H1 (cell line): ENCODE measurements at regions of chr11 and their contacts with region 1.

Region 1: GRCh38 chr11:10933455-10934292 is 75.8 kb upstream of the ZBED5 start:
- DNase-seq: peak; percentile 65 to 96
- H3K4me3 ChIP-seq: peak overlapping the region; percentile 64 to 86 (median 76); a peak in 7 of 8 replicates
- H3K27ac ChIP-seq: peak overlapping the region; percentile 49; the same call in 1 of the 2 replicates
- H3K4me1 ChIP-seq: peaks cover 3 to 14% (median 5%) of the 10 kb centered on the region in 4 experiments; a peak in 4 of 7 replicates
- H3K27me3 ChIP-seq: peaks cover 0 to 11% (median 10%) of the 10 kb centered on the region in 4 experiments; a peak in 5 of 7 replicates
- CTCF ChIP-seq: peak; percentile 80 to 98 (median 95)
- EP300 ChIP-seq: no peak
- POLR2A ChIP-seq: peak in 1 of 2 experiments; percentile 53; a peak in 1 of 3 replicates
- RAD21 ChIP-seq: peak; percentile 97 to 98

Region 2: DNA sequence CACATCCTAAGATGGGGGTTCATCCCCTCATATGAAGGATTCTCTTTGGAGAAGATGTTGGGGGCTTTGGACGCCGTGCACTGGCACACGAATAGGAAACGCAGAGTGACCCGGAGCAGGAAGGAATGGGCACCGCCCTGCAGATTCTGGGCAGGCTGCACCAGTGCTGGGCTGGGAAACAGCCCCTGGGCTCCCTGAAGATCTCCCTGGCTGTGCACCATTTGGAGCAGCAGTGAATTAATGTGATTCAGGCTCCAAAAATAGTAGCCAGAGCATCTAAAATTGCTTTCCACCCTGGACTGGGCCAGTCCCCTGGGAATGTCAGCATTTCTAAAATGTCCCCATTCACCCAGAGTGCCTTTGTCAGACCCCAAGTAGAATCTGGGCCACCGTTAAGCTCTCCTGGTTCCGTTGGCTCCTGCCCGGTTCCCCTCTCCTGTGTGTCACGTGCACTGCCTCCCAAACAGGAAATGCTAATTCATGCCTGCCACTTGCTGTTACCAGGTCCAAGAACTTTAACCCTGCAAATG is 258.7 kb before region 1 on chr11:
- CTCF ChIA-PET with region 1: no interaction called
- POLR2A ChIA-PET with region 1: no interaction called
- DNase-seq: no peak
- H3K4me3 ChIP-seq: no peak overlapping the region
- H3K27ac ChIP-seq: no peak overlapping the region
- H3K4me1 ChIP-seq: peaks cover 0 to 6% (median 3%) of the 10 kb centered on the region in 4 experiments; a peak in 2 of 7 replicates
- H3K27me3 ChIP-seq: no peaks in the 10 kb centered on the region
- CTCF ChIP-seq: no peak
- EP300 ChIP-seq: no peak
- POLR2A ChIP-seq: no peak
- RAD21 ChIP-seq: no peak

Region 3: GRCh38 chr11:10857709-10858438 is 75.8 kb before region 1 on chr11 and contains the start of gene ZBED5:
- CTCF ChIA-PET with region 1: interaction called, 3 read pairs
- POLR2A ChIA-PET with region 1: interaction called, 27 read pairs
- DNase-seq: peak; percentile 92 to 94
- H3K4me3 ChIP-seq: peak within 1 kb of the TSS; percentile 91 to 98 (median 95)
- H3K27ac ChIP-seq: peak within 1 kb of the TSS; percentile 88
- H3K4me1 ChIP-seq: peaks cover 0 to 8% (median 2%) of the 10 kb centered on the region in 4 experiments; a peak in 3 of 7 replicates
- H3K27me3 ChIP-seq: no peaks in the 10 kb centered on the region
- CTCF ChIP-seq: no peak
- EP300 ChIP-seq: no peak
- POLR2A ChIP-seq: peak in 1 of 2 experiments; percentile 88; a peak in 2 of 3 replicates
- RAD21 ChIP-seq: 0 out of 4 replicates have a peak, but pooled peaks have one; percentile 4
- total RNA-seq, gene ZBED5: 48.7 and 54.2 TPM in 2 replicates

Region 4: GRCh38 chr11:10943968-10944367 is 10.3 kb after region 1 on chr11:
- CTCF ChIA-PET with region 1: interaction called, 24 read pairs
- POLR2A ChIA-PET with region 1: interaction called, 5 read pairs
- DNase-seq: no peak
- H3K4me3 ChIP-seq: no peak overlapping the region
- H3K27ac ChIP-seq: no peak overlapping the region
- H3K4me1 ChIP-seq: no peaks in the 10 kb centered on the region
- H3K27me3 ChIP-seq: no peaks in the 10 kb centered on the region
- CTCF ChIP-seq: no peak
- EP300 ChIP-seq: no peak
- POLR2A ChIP-seq: no peak
- RAD21 ChIP-seq: no peak

Region 5: GRCh38 chr11:11010624-11011127 is 77.0 kb after region 1 on chr11:
- CTCF ChIA-PET with region 1: interaction called, 31 read pairs
- POLR2A ChIA-PET with region 1: interaction called, 5 read pairs
- DNase-seq: no peak
- H3K4me3 ChIP-seq: no peak overlapping the region
- H3K27ac ChIP-seq: no peak overlapping the region
- H3K4me1 ChIP-seq: peaks cover 3 to 8% (median 5%) of the 10 kb centered on the region in 4 experiments; a peak in 5 of 7 replicates
- H3K27me3 ChIP-seq: no peaks in the 10 kb centered on the region; a peak in 2 of 7 replicates
- CTCF ChIP-seq: peak; percentile 16 to 61 (median 47)
- EP300 ChIP-seq: no peak
- POLR2A ChIP-seq: no peak
- RAD21 ChIP-seq: peak; percentile 34 to 55; a peak in 3 of 4 replicates

Region 6: GRCh38 chr11:11022125-11022730 is 88.6 kb after region 1 on chr11:
- CTCF ChIA-PET with region 1: interaction called, 82 read pairs
- POLR2A ChIA-PET with region 1: interaction called, 9 read pairs
- DNase-seq: no peak
- H3K4me3 ChIP-seq: no peak overlapping the region
- H3K27ac ChIP-seq: no peak overlapping the region
- H3K4me1 ChIP-seq: peaks cover 0 to 4% (median 2%) of the 10 kb centered on the region in 4 experiments; a peak in 5 of 7 replicates
- H3K27me3 ChIP-seq: peaks cover 0 to 3% (median 0%) of the 10 kb centered on the region in 4 experiments; a peak in 1 of 7 replicates
- CTCF ChIP-seq: peak in 2 of 3 experiments; percentile 20 to 29; a peak in 2 of 4 replicates
- EP300 ChIP-seq: no peak
- POLR2A ChIP-seq: no peak
- RAD21 ChIP-seq: peak in 1 of 2 experiments; percentile 39; a peak in 3 of 4 replicates